CD4-positive, alpha-beta T cell (primary cell): ENCODE measurements at regions of chr14 and their contacts with region 1.

Region 1: DNA sequence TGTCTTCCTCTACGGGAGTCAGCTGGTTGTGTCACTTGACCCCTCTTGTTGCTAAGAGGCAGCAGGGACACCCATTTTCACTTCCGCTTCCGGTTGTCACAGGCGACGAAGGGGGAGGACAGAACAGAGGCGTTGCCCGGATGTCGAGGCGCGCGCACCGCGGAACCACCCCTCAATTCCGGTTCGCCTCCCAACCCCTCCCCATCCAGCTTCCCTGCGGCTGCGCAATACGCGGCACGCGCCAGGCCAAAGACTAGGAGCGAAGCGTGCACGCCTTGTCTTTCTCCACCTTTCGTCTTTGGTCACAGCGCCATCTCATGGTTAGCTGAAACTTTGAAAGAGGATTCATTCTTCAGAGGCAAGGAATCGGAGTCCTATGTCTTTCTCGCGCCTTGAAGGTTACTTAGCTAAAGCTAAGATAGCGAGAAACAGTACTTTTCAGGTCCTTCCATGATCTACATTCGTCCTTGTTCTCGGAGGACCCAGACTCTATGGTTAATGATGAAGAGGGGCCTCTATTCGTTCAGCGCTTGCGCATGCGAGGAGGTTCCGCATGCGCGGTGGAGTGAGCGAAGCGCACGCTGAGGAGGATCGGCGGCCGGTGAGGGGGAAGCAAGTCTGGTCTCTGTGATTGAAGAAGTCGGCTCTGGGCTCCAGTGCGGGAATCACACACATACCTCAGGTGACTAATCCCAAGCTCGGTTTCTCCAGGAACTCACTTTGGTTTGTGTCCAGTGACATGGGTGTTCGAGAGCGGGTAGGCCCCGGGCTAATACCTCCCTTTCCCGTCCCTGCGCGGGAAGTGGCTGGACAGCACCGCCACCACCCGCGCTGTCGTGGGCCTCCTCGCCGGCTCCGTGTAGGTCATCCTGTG is at the starts of genes ATP6V1D and EIF2S1:
- DNase-seq: peak; percentile 98 to 100 (median 99)
- ATAC-seq: peak; percentile 90
- H3K4me3 ChIP-seq: peak within 1 kb of the TSS; percentile 88
- H3K4me3 Mint-ChIP-seq: peak within 1 kb of the TSS; percentile 95
- H3K27ac ChIP-seq: peak within 1 kb of the TSS; percentile 87 to 99
- H3K27ac Mint-ChIP-seq: peak within 1 kb of the TSS; percentile 93
- H3K4me1 ChIP-seq: peaks cover 30% of the 10 kb centered on the region
- H3K4me1 Mint-ChIP-seq: peaks cover 87% of the 10 kb centered on the region
- H3K27me3 ChIP-seq: no peaks in the 10 kb centered on the region
- H3K27me3 Mint-ChIP-seq: no peaks in the 10 kb centered on the region
- CTCF ChIP-seq: peak; percentile 100
- total RNA-seq, gene ATP6V1D: 25.2 to 36.2 TPM
- total RNA-seq, gene EIF2S1: 23.1 to 28.8 TPM

Region 2: DNA sequence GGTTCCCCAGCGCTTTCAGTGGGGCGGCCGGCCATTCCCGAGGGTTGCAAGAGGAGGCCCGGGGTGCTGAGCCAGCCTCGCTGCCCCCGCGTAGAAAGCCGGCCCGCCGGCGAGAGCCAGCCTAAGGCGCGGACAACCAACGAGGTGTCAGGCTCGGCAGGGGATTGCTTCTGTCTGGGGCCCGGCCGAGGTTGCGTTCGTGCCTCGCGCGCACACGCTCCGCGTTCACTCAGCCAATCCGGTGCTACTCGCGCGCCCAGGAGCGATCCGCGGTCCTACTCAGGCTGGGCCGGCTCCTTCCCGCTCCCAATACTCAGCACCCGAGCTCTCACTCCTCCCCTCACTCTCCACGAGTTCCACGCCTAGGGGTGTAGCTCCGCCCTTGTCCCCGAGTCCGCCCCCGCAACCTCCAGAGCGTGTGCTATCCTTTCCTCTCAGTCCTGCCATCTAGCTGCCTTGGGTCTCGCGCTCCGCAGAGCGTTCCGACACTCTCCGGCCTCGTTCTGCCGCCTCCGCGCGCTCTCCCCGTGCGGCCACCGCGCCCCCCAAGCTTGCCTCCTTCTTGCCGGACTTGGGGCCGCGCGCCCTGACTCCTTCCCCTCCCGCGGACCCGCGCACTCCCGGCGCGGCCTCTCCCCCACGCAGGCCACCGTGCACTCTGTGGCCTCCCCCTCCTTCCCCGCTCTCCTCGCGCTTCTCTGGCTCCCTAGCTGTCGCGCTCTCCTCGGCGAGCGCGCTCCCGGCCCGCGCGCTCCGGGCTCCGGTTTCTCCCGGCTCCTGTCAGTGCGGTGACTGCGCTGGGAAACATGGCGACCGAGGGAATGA is 852.1 kb before region 1 on chr14 and contains the start of gene GPHN:
- CTCF ChIA-PET with region 1: no interaction called
- POLR2A ChIA-PET with region 1: interaction called, 9 read pairs
- intact Hi-C with region 1: loop called in 1 of 2 experiments (anchors 5 kb)
- DNase-seq: peak; percentile 71 to 95 (median 82)
- ATAC-seq: peak; percentile 89
- H3K4me3 ChIP-seq: peak within 1 kb of the TSS; percentile 90
- H3K4me3 Mint-ChIP-seq: peak within 1 kb of the TSS; percentile 99
- H3K27ac ChIP-seq: peak within 1 kb of the TSS; percentile 14 to 48
- H3K27ac Mint-ChIP-seq: peak within 1 kb of the TSS; percentile 94
- H3K4me1 ChIP-seq: peaks cover 19% of the 10 kb centered on the region
- H3K4me1 Mint-ChIP-seq: peaks cover 41% of the 10 kb centered on the region
- H3K27me3 ChIP-seq: no peaks in the 10 kb centered on the region
- H3K27me3 Mint-ChIP-seq: no peaks in the 10 kb centered on the region
- CTCF ChIP-seq: no peak
- total RNA-seq, gene GPHN: 10.0 to 10.7 TPM

Region 3: GRCh38 chr14:67240978-67241414 is 119.0 kb before region 1 on chr14:
- CTCF ChIA-PET with region 1: interaction called, 3 read pairs
- POLR2A ChIA-PET with region 1: interaction called, 15 read pairs
- intact Hi-C with region 1: loop called in 1 of 2 experiments (anchors 2 kb)
- DNase-seq: peak; percentile 82 to 96 (median 90)
- ATAC-seq: peak; percentile 92
- H3K4me3 ChIP-seq: peak overlapping the region; percentile 77
- H3K4me3 Mint-ChIP-seq: peak overlapping the region; percentile 94
- H3K27ac ChIP-seq: peak overlapping the region in 1 of 2 donors; percentile 67
- H3K27ac Mint-ChIP-seq: peak overlapping the region; percentile 80
- H3K4me1 ChIP-seq: peaks cover 10% of the 10 kb centered on the region
- H3K4me1 Mint-ChIP-seq: peaks cover 24% of the 10 kb centered on the region
- H3K27me3 ChIP-seq: no peaks in the 10 kb centered on the region
- H3K27me3 Mint-ChIP-seq: no peaks in the 10 kb centered on the region
- CTCF ChIP-seq: no peak

Region 4: DNA sequence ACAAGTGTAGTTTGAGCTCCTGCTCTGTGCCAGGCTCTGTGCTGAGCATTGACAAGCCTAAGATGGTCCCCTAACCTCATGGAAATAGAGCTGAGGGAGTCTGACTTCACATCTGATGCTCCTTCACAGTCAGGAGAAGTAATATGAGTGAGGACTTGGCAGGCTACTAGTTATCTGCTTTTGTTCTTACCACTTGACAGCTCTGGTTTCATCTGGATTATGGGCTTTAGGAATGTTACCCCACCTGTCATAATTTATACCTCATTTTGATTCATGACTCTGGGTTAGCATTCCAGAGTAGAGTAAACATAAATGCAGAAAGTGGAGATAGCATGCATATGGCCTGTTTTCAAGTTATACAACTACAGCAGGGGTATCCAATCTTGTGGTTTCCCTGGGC is 40.9 kb before region 1 on chr14:
- CTCF ChIA-PET with region 1: no interaction called
- POLR2A ChIA-PET with region 1: no interaction called
- intact Hi-C with region 1: no loop called
- DNase-seq: no peak
- ATAC-seq: no peak
- H3K4me3 ChIP-seq: no peak overlapping the region
- H3K4me3 Mint-ChIP-seq: no peak overlapping the region
- H3K27ac ChIP-seq: no peak overlapping the region
- H3K27ac Mint-ChIP-seq: no peak overlapping the region
- H3K4me1 ChIP-seq: no peaks in the 10 kb centered on the region
- H3K4me1 Mint-ChIP-seq: no peaks in the 10 kb centered on the region
- H3K27me3 ChIP-seq: no peaks in the 10 kb centered on the region
- H3K27me3 Mint-ChIP-seq: no peaks in the 10 kb centered on the region
- CTCF ChIP-seq: no peak

Region 5: GRCh38 chr14:67396501-67396900 is 36.5 kb after region 1 on chr14:
- CTCF ChIA-PET with region 1: no interaction called
- POLR2A ChIA-PET with region 1: no interaction called
- intact Hi-C with region 1: no loop called
- DNase-seq: no peak
- ATAC-seq: no peak
- H3K4me3 ChIP-seq: no peak overlapping the region
- H3K4me3 Mint-ChIP-seq: no peak overlapping the region
- H3K27ac ChIP-seq: no peak overlapping the region
- H3K27ac Mint-ChIP-seq: no peak overlapping the region
- H3K4me1 ChIP-seq: peaks cover 3% of the 10 kb centered on the region
- H3K4me1 Mint-ChIP-seq: peaks cover 6% of the 10 kb centered on the region
- H3K27me3 ChIP-seq: no peaks in the 10 kb centered on the region
- H3K27me3 Mint-ChIP-seq: no peaks in the 10 kb centered on the region
- CTCF ChIP-seq: no peak

Region 6: GRCh38 chr14:67599698-67600561 is 239.9 kb after region 1 on chr14 and contains the start of gene PIGH:
- CTCF ChIA-PET with region 1: interaction called, 6 read pairs
- POLR2A ChIA-PET with region 1: interaction called, 3 read pairs
- intact Hi-C with region 1: loop called in 1 of 2 experiments (anchors 5 kb)
- DNase-seq: peak; percentile 87 to 97 (median 94)
- ATAC-seq: peak; percentile 95
- H3K4me3 ChIP-seq: peak within 1 kb of the TSS; percentile 98
- H3K4me3 Mint-ChIP-seq: peak within 1 kb of the TSS; percentile 92
- H3K27ac ChIP-seq: peak within 1 kb of the TSS; percentile 56 to 83
- H3K27ac Mint-ChIP-seq: peak within 1 kb of the TSS; percentile 82
- H3K4me1 ChIP-seq: peaks cover 24% of the 10 kb centered on the region
- H3K4me1 Mint-ChIP-seq: peaks cover 49% of the 10 kb centered on the region
- H3K27me3 ChIP-seq: no peaks in the 10 kb centered on the region
- H3K27me3 Mint-ChIP-seq: no peaks in the 10 kb centered on the region
- CTCF ChIP-seq: peak; percentile 75
- total RNA-seq, gene PIGH: 66.0 to 69.7 TPM

Region 7: GRCh38 chr14:67674481-67675169 is 314.6 kb after region 1 on chr14 and contains the start of gene VTI1B:
- CTCF ChIA-PET with region 1: interaction called, 4 read pairs
- POLR2A ChIA-PET with region 1: interaction called, 5 read pairs
- intact Hi-C with region 1: loop called in 1 of 2 experiments (anchors 5 kb)
- DNase-seq: peak; percentile 57 to 89 (median 72)
- ATAC-seq: peak; percentile 91
- H3K4me3 ChIP-seq: peak within 1 kb of the TSS; percentile 83
- H3K4me3 Mint-ChIP-seq: peak within 1 kb of the TSS; percentile 91
- H3K27ac ChIP-seq: peak within 1 kb of the TSS; percentile 92 to 95
- H3K27ac Mint-ChIP-seq: peak within 1 kb of the TSS; percentile 89
- H3K4me1 ChIP-seq: peaks cover 33% of the 10 kb centered on the region
- H3K4me1 Mint-ChIP-seq: peaks cover 43% of the 10 kb centered on the region
- H3K27me3 ChIP-seq: no peaks in the 10 kb centered on the region
- H3K27me3 Mint-ChIP-seq: no peaks in the 10 kb centered on the region
- CTCF ChIP-seq: no peak
- total RNA-seq, gene VTI1B: 24.4 to 27.0 TPM

Region 8: DNA sequence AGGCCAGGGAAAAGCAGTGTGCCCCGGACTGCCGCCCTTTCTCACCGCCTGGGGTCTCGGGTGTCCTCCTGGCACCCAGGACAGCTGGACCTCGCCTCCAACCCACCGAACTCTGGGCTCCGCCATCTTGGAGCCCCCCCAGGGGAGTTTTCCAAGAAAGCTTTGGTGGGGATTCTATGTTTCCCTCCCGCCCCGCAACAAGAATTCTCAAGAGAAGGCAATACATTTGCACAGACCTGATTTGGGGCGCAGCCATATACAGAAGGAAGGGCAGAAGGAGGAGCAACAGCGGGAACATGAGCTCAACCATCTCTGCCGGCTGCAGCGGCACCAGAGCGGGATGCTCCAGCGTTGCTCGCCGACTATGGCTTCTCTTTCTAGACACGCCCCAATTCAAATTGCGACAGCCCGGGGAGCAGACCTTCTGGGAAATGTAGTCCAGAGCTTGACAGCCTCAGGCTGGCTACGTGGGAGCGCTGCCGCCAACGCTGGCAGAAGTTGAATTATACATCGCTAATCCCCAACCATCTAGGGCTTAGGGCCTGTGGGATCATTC is 335.5 kb after region 1 on chr14 and contains the start of gene RDH11:
- CTCF ChIA-PET with region 1: interaction called, 4 read pairs
- POLR2A ChIA-PET with region 1: interaction called, 7 read pairs
- intact Hi-C with region 1: loop called in 1 of 2 experiments (anchors 10 kb)
- DNase-seq: peak; percentile 63 to 94 (median 76)
- ATAC-seq: peak; percentile 96
- H3K4me3 ChIP-seq: peak within 1 kb of the TSS; percentile 87
- H3K4me3 Mint-ChIP-seq: peak within 1 kb of the TSS; percentile 88
- H3K27ac ChIP-seq: peak within 1 kb of the TSS; percentile 44 to 64
- H3K27ac Mint-ChIP-seq: peak within 1 kb of the TSS; percentile 74
- H3K4me1 ChIP-seq: peaks cover 14% of the 10 kb centered on the region
- H3K4me1 Mint-ChIP-seq: peaks cover 27% of the 10 kb centered on the region
- H3K27me3 ChIP-seq: no peaks in the 10 kb centered on the region
- H3K27me3 Mint-ChIP-seq: no peaks in the 10 kb centered on the region
- CTCF ChIP-seq: no peak
- total RNA-seq, gene RDH11: 13.6 to 14.2 TPM

Region 9: DNA sequence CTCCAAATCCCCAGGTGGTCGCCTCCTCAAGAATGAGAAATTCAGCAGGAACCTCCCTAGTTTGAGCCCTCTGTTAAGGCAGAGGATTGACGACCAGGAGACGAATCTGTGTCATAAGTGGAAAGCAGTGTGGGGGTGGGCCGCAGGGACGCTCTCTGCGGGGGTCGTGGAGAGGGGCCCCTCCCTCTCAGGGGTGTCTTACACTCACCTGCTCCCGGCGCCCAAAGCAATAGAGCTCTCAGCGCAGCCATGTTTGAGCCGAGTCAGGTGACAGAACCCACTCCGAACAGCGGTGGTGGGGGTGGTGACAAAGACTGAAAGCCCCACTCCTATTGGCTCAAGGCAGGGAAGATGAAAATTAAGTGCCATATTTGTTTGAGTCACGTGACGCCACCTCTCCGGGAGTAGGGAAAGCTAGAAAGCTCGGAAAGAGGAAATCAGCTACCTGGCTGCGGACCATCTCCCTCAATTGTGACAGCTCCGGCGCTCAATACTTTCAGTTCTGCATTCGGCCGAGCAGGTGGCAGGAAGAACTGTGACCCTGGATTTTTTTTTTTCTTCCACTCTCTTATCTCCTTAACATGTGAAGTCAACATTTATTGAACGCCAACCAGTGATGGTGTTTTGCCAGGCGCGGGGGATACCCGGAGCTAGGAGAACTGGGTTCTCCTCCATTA is 456.5 kb after region 1 on chr14 and contains the start of gene ZFYVE26:
- CTCF ChIA-PET with region 1: no interaction called
- POLR2A ChIA-PET with region 1: no interaction called
- intact Hi-C with region 1: loop called in 1 of 2 experiments (anchors 5 kb)
- DNase-seq: peak; percentile 77 to 95 (median 82)
- ATAC-seq: peak; percentile 94
- H3K4me3 ChIP-seq: peak within 1 kb of the TSS; percentile 78
- H3K4me3 Mint-ChIP-seq: peak within 1 kb of the TSS; percentile 94
- H3K27ac ChIP-seq: peak within 1 kb of the TSS; percentile 67 to 74
- H3K27ac Mint-ChIP-seq: peak within 1 kb of the TSS; percentile 85
- H3K4me1 ChIP-seq: peaks cover 38% of the 10 kb centered on the region
- H3K4me1 Mint-ChIP-seq: peaks cover 68% of the 10 kb centered on the region
- H3K27me3 ChIP-seq: no peaks in the 10 kb centered on the region
- H3K27me3 Mint-ChIP-seq: no peaks in the 10 kb centered on the region
- CTCF ChIP-seq: no peak
- total RNA-seq, gene ZFYVE26: 20.5 to 23.2 TPM

Region 10: DNA sequence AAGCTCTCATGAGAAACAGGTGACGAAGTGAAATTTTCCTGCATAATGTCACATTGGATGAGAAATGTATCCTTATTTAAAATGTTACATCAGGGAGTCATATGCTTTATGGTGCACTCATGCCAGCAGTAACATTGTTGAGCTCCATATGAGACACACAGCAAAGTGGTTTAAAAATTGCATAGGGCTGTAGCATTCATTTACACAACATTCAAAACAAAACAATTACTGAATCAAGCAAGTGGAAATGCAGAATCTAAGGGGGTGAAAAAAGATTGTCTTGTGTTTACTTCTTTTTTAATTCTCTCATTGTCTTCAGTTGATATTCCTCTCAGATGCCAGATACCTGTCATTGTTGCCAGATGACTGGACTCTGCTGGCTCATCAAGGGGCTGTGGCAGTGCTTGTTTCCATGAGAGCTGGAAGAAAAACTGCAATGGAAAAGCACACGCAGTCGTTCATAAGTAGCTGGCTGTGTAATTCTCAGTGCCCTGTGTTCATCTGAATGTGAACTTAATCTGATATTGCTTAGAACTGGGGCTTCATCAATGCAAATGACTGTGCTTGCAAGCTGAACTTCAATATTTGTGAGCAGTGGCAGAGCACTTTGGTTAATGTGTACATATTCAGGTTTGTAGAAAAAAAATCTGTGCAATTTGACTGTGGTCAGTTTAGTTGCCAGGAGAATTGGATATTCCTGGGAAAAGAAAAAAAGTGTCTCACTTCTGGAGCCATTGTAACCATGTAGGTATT is 765.1 kb after region 1 on chr14:
- CTCF ChIA-PET with region 1: no interaction called
- POLR2A ChIA-PET with region 1: no interaction called
- intact Hi-C with region 1: no loop called
- DNase-seq: no peak
- ATAC-seq: no peak
- H3K4me3 ChIP-seq: no peak overlapping the region
- H3K4me3 Mint-ChIP-seq: no peak overlapping the region
- H3K27ac ChIP-seq: no peak overlapping the region
- H3K27ac Mint-ChIP-seq: no peak overlapping the region
- H3K4me1 ChIP-seq: no peaks in the 10 kb centered on the region
- H3K4me1 Mint-ChIP-seq: no peaks in the 10 kb centered on the region
- H3K27me3 ChIP-seq: no peaks in the 10 kb centered on the region
- H3K27me3 Mint-ChIP-seq: no peaks in the 10 kb centered on the region
- CTCF ChIP-seq: no peak